Calu3 (cell line): ENCODE measurements at regions of chrX and their contacts with region 1.

Region 1: DNA sequence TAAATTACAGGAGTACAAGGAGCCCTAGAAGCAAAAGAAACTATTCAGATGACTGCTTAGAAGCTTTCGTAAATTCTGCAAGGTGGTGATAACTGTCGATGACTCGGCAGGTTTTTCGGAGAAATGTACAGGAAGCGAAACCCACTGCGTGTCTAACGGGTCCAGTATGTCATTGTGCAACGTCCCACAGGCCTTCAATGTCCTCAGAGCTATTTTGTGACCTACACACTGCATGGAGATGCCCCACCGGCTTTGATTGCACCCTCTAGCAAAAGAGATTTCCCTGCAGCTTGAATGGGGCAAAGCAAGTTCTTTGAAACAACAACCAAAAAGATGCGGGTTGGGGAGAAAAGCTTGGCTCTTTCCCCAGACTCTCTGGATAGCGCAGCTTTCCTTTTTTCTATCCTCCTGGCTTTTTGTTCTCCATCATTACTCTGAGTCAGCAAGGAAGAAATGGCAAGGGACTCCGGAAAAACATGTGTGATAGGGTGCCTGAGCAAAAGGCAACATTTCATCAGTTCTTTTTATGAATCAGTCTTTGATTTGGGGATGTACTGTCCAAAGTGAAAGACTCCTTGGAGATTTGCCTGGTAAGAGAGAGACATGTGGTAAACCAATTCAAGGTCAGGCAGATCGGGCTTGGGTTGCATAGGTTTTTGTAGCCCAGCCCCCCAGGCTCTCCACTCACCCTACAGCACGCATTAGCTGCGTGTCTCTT is 112.0 kb upstream of the TBL1X start:
- DNase-seq: no peak
- H3K4me3 Mint-ChIP-seq: peak overlapping the region; percentile 15
- H3K27ac Mint-ChIP-seq: peak overlapping the region; percentile 93
- H3K4me1 Mint-ChIP-seq: peaks cover 29% of the 10 kb centered on the region
- H3K27me3 Mint-ChIP-seq: no peaks in the 10 kb centered on the region
- CTCF ChIP-seq: no peak

Region 2: GRCh38 chrX:8868906-8869305 is 483.9 kb before region 1 on chrX:
- CTCF ChIA-PET with region 1: no interaction called
- intact Hi-C with region 1: loop called (anchors 2 kb)
- DNase-seq: no peak
- H3K4me3 Mint-ChIP-seq: no peak overlapping the region
- H3K27ac Mint-ChIP-seq: peak overlapping the region; percentile 79
- H3K4me1 Mint-ChIP-seq: peaks cover 20% of the 10 kb centered on the region
- H3K27me3 Mint-ChIP-seq: no peaks in the 10 kb centered on the region
- CTCF ChIP-seq: no peak

Region 3: GRCh38 chrX:9164535-9165425 is 188.1 kb before region 1 on chrX:
- CTCF ChIA-PET with region 1: no interaction called
- intact Hi-C with region 1: loop called (anchors 2 kb)
- DNase-seq: peak; percentile 72
- H3K4me3 Mint-ChIP-seq: peak overlapping the region; percentile 56
- H3K27ac Mint-ChIP-seq: peak overlapping the region; percentile 95
- H3K4me1 Mint-ChIP-seq: peaks cover 44% of the 10 kb centered on the region
- H3K27me3 Mint-ChIP-seq: no peaks in the 10 kb centered on the region
- CTCF ChIP-seq: no peak

Region 4: DNA sequence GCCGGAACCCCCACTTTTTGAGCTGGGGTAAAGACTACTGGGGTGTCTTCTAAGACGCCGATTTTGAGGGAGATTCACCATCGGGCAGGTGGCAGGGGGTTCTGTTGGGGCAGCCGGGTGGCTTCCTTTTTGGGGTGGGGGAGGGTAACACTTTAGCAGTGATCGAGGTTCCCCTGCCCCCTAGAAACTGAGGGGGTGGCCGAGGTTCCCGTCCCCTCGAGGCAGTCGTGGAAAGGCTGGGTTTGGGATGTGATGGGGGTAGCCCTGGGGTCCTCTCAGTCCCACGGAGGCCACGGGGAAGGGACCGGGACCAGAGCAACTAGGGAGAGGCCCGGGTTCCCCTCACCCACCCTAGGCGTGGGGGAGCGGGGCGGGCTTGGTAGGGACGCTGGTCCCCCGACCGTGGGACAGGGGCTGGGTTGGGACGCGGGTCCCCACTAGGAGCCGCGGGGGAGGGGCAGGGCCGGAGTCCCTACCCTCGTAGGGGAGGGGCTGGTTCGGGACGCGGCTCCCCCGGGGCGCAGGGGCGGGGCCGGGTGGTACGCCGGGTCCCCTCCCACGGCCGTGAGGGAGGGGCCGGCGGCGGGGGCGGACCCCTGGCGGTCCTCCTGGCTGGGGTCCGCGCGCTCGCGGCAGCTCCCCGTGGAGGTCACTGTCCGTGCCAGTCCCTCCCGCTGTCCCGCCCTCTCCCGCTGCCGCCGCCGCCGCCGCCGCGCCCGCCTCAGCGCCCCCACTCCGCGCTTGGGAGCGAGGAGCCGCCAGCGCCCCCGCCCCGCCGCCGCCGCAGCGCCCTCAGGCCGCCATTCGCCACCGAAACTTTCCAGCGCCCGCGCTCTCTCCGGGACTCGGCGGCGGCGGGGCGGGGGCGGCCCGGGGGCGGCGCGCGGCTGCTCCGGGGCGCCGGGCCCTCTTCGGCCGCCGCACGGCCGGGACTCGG is 111.8 kb after region 1 on chrX and contains the start of gene TBL1X:
- CTCF ChIA-PET with region 1: interaction called, 4 read pairs
- intact Hi-C with region 1: loop called (anchors 1 kb)
- DNase-seq: peak; percentile 74
- H3K4me3 Mint-ChIP-seq: peak within 1 kb of the TSS; percentile 67
- H3K27ac Mint-ChIP-seq: peak within 1 kb of the TSS; percentile 96
- H3K4me1 Mint-ChIP-seq: peaks cover 33% of the 10 kb centered on the region
- H3K27me3 Mint-ChIP-seq: no peaks in the 10 kb centered on the region
- CTCF ChIP-seq: no peak
- total RNA-seq, gene TBL1X: 24.9 and 25.0 TPM in 2 replicates

Region 5: DNA sequence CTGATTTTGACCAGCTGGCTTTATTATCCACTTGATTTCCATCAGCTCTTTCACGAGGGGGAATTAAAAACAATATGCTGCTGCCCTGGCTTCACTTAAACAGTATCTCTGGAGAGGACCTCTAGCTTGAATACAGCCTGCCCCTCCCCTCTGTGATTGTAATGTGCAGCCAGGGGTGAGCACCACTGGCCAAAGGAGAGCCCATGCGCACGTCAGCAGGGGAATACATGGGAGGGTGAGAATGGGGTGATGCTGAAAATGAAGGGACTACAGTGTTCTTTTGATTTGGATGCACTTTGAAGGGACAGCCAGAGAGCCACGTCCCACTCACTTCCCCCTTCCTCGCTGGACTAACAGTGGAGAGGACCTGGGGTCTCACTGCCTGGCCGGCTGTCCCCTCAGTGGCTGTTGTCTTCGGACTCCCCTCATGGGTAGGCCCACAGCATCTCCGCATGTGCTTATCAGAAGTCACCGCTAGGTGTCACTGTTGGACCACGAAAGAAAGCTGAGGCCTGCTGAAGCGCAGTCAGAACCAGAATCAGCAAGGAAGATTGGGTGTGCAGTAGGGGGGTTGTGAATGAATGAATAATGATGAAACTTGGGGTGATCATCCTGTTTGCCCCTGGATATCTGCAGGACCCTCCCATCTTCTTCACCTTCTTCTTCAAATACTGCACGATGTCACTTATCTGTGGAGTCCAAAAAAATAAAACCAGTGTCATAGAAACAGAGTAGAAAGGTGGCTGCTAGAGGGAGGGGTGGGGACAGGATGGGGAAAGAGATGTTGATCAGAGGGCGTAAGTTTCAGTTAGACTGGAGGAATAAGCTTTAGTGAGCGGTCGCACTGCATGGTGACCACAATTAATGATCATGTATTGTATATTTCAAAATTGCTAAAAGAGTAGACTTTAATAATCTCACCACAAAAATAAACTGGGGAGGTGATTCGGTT is 836.7 kb after region 1 on chrX:
- CTCF ChIA-PET with region 1: no interaction called
- intact Hi-C with region 1: no loop called
- DNase-seq: peak; percentile 76
- H3K4me3 Mint-ChIP-seq: no peak overlapping the region
- H3K27ac Mint-ChIP-seq: peak overlapping the region; percentile 73
- H3K4me1 Mint-ChIP-seq: peaks cover 8% of the 10 kb centered on the region
- H3K27me3 Mint-ChIP-seq: no peaks in the 10 kb centered on the region
- CTCF ChIP-seq: peak; percentile 80